ENCODE measurements at regions of chr19 and their contacts with region 1.

Region 1: DNA sequence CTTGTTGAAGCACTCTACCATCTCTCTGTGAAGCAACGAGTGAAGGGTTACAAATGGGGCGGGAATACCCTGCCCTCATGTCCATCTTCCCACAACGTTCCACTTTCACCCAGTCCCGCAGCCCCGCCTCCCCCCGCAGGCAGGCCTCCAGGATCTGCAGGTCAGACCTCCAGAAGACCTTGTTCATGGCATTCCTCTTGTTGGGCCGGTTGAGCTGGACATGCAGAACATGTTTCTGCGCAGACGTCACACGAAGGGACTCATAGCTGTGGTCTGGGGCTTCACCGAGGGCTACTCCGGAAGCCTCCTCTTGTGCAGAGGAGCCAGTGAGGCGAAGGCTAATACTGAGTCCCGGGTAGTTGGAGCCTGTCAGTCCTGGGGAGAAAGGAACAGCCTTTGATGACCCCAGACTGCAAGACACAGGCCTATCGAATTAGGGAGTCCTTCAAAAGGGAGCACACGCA is 420 bp downstream of the ECH1 start:
- DNase-seq: peak; percentile 96 to 100
- H3K4me3 ChIP-seq: peak overlapping the region; percentile 60
- H3K27ac ChIP-seq: peak overlapping the region; percentile 98
- H3K4me1 ChIP-seq: peaks cover 67% of the 10 kb centered on the region
- H3K27me3 ChIP-seq: no peaks in the 10 kb centered on the region
- CTCF ChIP-seq: no peak

Region 2: DNA sequence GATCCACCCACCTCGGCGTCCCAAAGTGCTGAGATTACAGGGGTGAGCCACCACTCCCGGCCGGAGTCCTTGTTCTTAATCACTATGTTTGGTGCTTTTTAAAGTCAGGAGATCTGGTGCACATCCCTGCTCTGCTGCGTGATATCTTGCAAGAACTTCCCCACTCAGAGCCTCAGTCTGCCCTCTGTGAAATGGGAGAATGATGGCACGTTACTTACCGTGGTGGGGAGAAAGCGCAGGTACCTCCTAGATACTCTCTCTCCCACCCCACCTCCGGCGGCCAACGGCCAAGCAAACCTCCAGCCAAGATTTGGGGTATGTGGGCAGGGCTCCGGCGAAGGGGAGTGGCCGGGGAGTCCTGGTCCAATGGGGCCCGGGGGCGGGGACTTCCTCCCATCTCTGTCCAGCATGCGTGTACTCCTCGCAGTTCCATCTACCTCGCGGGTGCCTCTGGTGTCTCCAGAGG is 397.9 kb before region 1 on chr19 and contains the start of gene RYR1:
- CTCF ChIA-PET with region 1: no interaction called
- POLR2A ChIA-PET with region 1: no interaction called
- intact Hi-C with region 1: no loop called
- DNase-seq: peak in 1 of 2 experiments; percentile 17
- H3K4me3 ChIP-seq: no peak within 1 kb of the TSS
- H3K27ac ChIP-seq: no peak within 1 kb of the TSS
- H3K4me1 ChIP-seq: no peaks in the 10 kb centered on the region
- H3K27me3 ChIP-seq: peaks cover 3% of the 10 kb centered on the region; the same call in 1 of the 2 replicates
- CTCF ChIP-seq: no peak
- total RNA-seq, gene RYR1: 1.0 and 1.5 TPM in 2 replicates

Region 3: DNA sequence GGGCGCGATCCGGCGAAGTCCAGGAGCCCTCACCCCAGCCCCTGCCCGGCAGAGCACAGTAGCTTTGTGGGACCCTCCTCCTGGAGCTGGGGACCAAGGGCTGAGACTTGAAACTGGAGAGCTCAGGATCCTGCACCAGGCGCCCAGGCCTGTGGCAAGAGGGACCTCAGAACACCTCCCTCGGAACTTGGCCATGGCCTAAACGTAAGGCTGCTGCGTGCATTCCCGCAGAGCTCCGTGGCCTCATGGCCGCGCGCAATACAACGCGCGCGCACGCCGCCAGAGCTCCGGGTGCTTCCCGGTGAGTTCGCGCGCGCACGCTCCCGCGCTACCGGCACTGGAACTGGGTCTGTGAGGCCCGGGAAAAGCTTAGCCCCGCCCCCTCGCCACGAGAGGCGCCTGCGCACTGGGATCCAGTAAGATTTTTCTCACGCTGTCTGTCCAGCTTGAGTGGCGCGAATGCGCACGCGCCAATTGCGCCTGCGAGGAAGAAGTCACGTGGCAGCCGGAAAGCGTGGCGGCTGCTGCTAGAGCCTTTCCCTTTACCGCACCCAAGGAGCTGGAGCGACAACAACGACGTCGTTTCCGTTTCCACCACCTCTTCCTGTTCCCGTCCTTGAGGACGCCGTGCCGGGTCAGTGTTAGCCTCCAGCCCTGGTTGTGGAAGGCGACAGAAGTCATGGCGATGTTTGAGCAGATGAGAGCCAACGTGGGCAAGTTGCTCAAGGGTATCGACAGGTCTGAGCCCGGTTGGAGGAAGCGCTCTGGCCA is 212.4 kb before region 1 on chr19 and contains the start of gene EIF3K:
- CTCF ChIA-PET with region 1: no interaction called
- POLR2A ChIA-PET with region 1: interaction called, 18 read pairs
- intact Hi-C with region 1: no loop called
- DNase-seq: peak; percentile 96 to 99
- H3K4me3 ChIP-seq: peak within 1 kb of the TSS; percentile 87
- H3K27ac ChIP-seq: peak within 1 kb of the TSS; percentile 24
- H3K4me1 ChIP-seq: peaks cover 15% of the 10 kb centered on the region
- H3K27me3 ChIP-seq: no peaks in the 10 kb centered on the region
- CTCF ChIP-seq: no peak
- total RNA-seq, gene EIF3K: 230 and 292 TPM in 2 replicates

Region 4: GRCh38 chr19:38729653-38730469 is 101.3 kb before region 1 on chr19:
- CTCF ChIA-PET with region 1: interaction called, 3 read pairs
- POLR2A ChIA-PET with region 1: interaction called, 22 read pairs
- intact Hi-C with region 1: no loop called
- DNase-seq: peak; percentile 65 to 81
- H3K4me3 ChIP-seq: no peak overlapping the region
- H3K27ac ChIP-seq: peak overlapping the region; percentile 58; the same call in 1 of the 2 replicates
- H3K4me1 ChIP-seq: peaks cover 41% of the 10 kb centered on the region
- H3K27me3 ChIP-seq: no peaks in the 10 kb centered on the region
- CTCF ChIP-seq: peak; percentile 92

Region 5: GRCh38 chr19:38769635-38770211 is 61.5 kb before region 1 on chr19:
- CTCF ChIA-PET with region 1: no interaction called
- POLR2A ChIA-PET with region 1: interaction called, 15 read pairs
- intact Hi-C with region 1: loop called (anchors 2 kb)
- DNase-seq: peak in 1 of 2 experiments; percentile 69
- H3K4me3 ChIP-seq: no peak overlapping the region
- H3K27ac ChIP-seq: no peak overlapping the region
- H3K4me1 ChIP-seq: no peaks in the 10 kb centered on the region
- H3K27me3 ChIP-seq: no peaks in the 10 kb centered on the region
- CTCF ChIP-seq: peak; percentile 80

Region 6: GRCh38 chr19:38849860-38850435 is 18.8 kb after region 1 on chr19 and contains the start of gene HNRNPL:
- CTCF ChIA-PET with region 1: no interaction called
- POLR2A ChIA-PET with region 1: no interaction called
- intact Hi-C with region 1: loop called (anchors 2 kb)
- DNase-seq: peak; percentile 99
- H3K4me3 ChIP-seq: peak within 1 kb of the TSS; percentile 79
- H3K27ac ChIP-seq: peak within 1 kb of the TSS; percentile 93
- H3K4me1 ChIP-seq: peaks cover 35% of the 10 kb centered on the region
- H3K27me3 ChIP-seq: no peaks in the 10 kb centered on the region
- CTCF ChIP-seq: peak; percentile 63
- total RNA-seq, gene HNRNPL: 368 and 443 TPM in 2 replicates

Region 7: DNA sequence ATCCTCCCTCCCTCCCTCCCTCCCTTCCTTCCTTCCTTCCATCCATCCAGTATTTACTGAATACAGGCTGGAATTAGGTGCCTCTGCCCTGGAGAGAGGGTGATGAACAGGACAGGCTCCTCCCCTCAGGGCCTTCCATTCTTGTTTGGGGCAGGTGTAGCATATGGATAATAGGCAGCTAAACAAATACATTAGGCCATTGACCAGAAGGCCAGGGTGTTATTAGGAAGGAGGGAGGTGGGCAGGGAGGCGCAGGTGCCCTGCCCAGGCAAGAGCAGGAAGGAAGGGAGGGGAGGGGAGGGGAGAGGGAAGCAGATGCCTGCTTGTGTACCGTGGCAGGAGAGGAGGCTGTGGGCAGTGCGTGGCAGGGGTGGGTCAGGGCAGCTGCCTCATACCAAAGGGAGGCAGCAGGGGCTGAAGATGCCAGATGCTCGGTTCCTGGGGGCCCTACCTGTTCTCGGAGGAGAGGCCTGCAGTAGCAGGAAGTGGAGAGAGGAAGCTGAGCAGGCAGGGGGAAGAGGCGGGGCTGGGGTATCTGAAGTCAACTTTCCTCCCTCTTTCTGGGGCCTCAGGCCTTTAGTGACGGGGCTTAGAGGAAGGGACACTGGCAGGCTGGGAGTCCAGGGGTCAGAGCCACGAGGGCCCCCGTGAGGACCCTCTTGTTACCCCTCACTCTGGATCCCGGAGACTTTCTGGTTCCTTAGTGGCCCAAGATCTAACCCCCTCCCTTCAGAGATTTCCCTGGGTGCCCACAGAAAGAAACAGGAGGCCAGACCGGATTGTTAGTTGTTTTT is 46.8 kb after region 1 on chr19 and contains the start of gene RINL:
- CTCF ChIA-PET with region 1: no interaction called
- POLR2A ChIA-PET with region 1: no interaction called
- intact Hi-C with region 1: no loop called
- DNase-seq: peak in 1 of 2 experiments; percentile 11
- H3K4me3 ChIP-seq: no peak within 1 kb of the TSS
- H3K27ac ChIP-seq: 0 out of 2 replicates have a peak within 1 kb of the TSS, but pooled peaks have one; percentile 6
- H3K4me1 ChIP-seq: peaks cover 23% of the 10 kb centered on the region
- H3K27me3 ChIP-seq: no peaks in the 10 kb centered on the region
- CTCF ChIP-seq: no peak
- total RNA-seq, gene RINL: 10.3 and 14.6 TPM in 2 replicates

Region 8: DNA sequence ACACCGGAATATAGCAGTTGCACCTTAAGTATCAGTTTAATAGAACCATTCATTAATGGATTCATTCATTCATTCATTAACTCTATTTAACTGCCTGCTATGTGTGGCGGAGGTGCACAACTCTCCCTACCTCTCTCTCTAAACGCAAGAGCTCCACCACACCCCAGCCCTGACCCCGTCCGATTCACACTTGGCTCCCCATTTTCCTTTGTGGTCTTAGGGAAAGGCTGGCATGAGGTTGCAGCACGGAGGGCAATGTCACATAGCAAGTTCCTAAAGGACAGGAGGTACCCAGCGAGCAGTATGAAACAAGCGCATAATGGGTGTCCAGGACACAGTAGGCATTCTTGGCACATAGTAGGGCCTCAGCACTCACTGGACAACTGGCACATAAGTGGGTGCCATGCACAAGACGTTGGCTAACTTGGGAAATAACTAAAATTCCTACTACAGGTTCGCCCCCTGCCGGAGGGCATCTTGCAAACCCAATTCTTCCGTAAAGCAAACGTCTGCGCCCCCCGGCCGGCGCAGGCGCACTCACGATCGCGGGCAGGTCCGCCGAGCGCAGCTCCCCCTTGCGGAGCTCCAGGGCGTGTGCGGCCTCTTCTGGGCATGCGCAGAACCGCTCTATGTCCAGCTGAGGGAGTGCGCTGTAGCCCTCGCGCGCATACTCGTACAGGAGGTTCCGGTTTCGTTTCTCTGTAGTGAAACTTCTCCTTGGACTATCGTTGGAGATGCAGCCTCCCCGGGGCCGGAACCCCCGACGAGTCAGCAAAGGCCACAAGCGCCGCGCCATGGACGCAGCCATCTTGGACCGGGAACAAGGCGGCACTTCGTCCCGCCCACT is 99.0 kb after region 1 on chr19 and contains the start of gene SARS2:
- CTCF ChIA-PET with region 1: no interaction called
- POLR2A ChIA-PET with region 1: interaction called, 3 read pairs
- intact Hi-C with region 1: loop called (anchors 2 kb)
- DNase-seq: peak; percentile 86 to 92
- H3K4me3 ChIP-seq: peak within 1 kb of the TSS; percentile 86
- H3K27ac ChIP-seq: peak within 1 kb of the TSS; percentile 65
- H3K4me1 ChIP-seq: peaks cover 17% of the 10 kb centered on the region; the same call in 1 of the 2 replicates
- H3K27me3 ChIP-seq: no peaks in the 10 kb centered on the region
- CTCF ChIP-seq: peak; percentile 93
- total RNA-seq, gene SARS2: 33.7 and 34.9 TPM in 2 replicates

Measured in PC-9 (cell line).